ENCODE measurements at regions of chr17 and their contacts with region 1.

Region 1: GRCh38 chr17:36529121-36529520 is 5.5 kb downstream of the MYO19 start:
- DNase-seq: no peak
- H3K4me3 ChIP-seq: no peak overlapping the region
- H3K27ac ChIP-seq: no peak overlapping the region
- H3K4me1 ChIP-seq: peaks cover 3 to 6% (median 5%) of the 10 kb centered on the region in 4 experiments; a peak in 4 of 7 replicates
- H3K27me3 ChIP-seq: no peaks in the 10 kb centered on the region
- CTCF ChIP-seq: no peak
- EP300 ChIP-seq: no peak
- POLR2A ChIP-seq: no peak
- RAD21 ChIP-seq: no peak

Region 2: DNA sequence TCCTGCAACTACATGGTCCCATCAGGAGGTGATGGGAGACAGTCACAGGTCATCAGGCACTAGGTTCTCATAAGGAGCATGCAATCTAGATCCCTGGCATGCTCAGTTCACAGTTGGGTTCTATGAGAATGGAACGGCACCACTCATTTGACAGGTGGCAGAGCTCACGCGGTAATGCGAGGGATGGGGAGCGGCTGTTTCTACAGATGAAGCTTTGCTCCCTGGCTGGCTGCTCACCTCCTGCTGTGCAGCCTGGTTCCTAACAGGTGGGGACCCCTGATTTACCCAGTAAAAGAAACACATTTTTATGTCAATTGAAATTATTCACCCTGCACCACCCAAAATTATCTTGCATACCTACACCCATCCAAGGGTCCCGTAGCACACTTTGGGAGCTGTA is 85.3 kb before region 1 on chr17:
- CTCF ChIA-PET with region 1: no interaction called
- POLR2A ChIA-PET with region 1: no interaction called
- DNase-seq: no peak
- H3K4me3 ChIP-seq: no peak overlapping the region
- H3K27ac ChIP-seq: no peak overlapping the region
- H3K4me1 ChIP-seq: no peaks in the 10 kb centered on the region
- H3K27me3 ChIP-seq: no peaks in the 10 kb centered on the region
- CTCF ChIP-seq: no peak
- EP300 ChIP-seq: no peak
- POLR2A ChIP-seq: no peak
- RAD21 ChIP-seq: no peak

Region 3: GRCh38 chr17:36463916-36464315 is 65.2 kb before region 1 on chr17:
- CTCF ChIA-PET with region 1: no interaction called
- POLR2A ChIA-PET with region 1: no interaction called
- DNase-seq: peak; percentile 69 to 95
- H3K4me3 ChIP-seq: peak overlapping the region in 1 of 4 experiments; percentile 34; a peak in 2 of 8 replicates
- H3K27ac ChIP-seq: no peak overlapping the region
- H3K4me1 ChIP-seq: 0 out of 7 replicates have a peak, but pooled peaks cover 0 to 2% (median 0%) of the 10 kb centered on the region in 4 experiments
- H3K27me3 ChIP-seq: peaks cover 4 to 28% (median 18%) of the 10 kb centered on the region in 4 experiments
- CTCF ChIP-seq: peak in 1 of 3 experiments; percentile 9; a peak in 2 of 4 replicates
- EP300 ChIP-seq: 0 out of 3 replicates have a peak, but pooled peaks of 1 of the 2 experiments have one; percentile 8
- POLR2A ChIP-seq: no peak
- RAD21 ChIP-seq: peak in 1 of 2 experiments; percentile 15; a peak in 1 of 4 replicates

Region 4: GRCh38 chr17:36503456-36504155 is 25.5 kb before region 1 on chr17:
- CTCF ChIA-PET with region 1: no interaction called
- POLR2A ChIA-PET with region 1: interaction called, 53 read pairs
- DNase-seq: no peak
- H3K4me3 ChIP-seq: no peak overlapping the region
- H3K27ac ChIP-seq: no peak overlapping the region
- H3K4me1 ChIP-seq: no peaks in the 10 kb centered on the region
- H3K27me3 ChIP-seq: no peaks in the 10 kb centered on the region
- CTCF ChIP-seq: no peak
- EP300 ChIP-seq: no peak
- POLR2A ChIP-seq: no peak
- RAD21 ChIP-seq: no peak

Region 5: GRCh38 chr17:36510636-36511035 is 18.5 kb before region 1 on chr17:
- CTCF ChIA-PET with region 1: no interaction called
- POLR2A ChIA-PET with region 1: interaction called, 89 read pairs
- DNase-seq: no peak
- H3K4me3 ChIP-seq: no peak overlapping the region
- H3K27ac ChIP-seq: no peak overlapping the region
- H3K4me1 ChIP-seq: no peaks in the 10 kb centered on the region
- H3K27me3 ChIP-seq: no peaks in the 10 kb centered on the region
- CTCF ChIP-seq: no peak
- EP300 ChIP-seq: no peak
- POLR2A ChIP-seq: no peak
- RAD21 ChIP-seq: no peak

Region 6: DNA sequence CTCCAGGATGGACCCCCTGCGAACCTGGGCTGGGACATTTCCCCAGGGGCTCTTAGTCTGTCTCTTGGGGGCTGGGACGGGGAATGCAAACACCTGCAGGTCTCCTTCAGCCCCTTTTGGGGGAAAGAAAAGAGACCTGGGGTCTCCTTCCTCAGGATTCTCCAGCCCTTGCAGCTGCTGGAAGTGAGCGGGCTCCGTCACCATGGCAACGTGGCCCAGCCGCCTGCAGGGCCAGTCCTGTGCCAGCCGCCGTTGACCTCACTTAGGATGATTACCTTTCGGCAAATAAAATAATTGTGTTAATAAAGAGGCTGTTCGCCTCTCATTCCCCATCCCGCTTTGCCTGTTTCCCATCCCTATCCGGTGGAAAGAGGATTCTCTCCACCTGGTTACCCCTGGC is 98.0 kb after region 1 on chr17:
- CTCF ChIA-PET with region 1: no interaction called
- POLR2A ChIA-PET with region 1: no interaction called
- DNase-seq: peak in 1 of 2 experiments; percentile 75
- H3K4me3 ChIP-seq: no peak overlapping the region
- H3K27ac ChIP-seq: no peak overlapping the region
- H3K4me1 ChIP-seq: peaks cover 0 to 13% (median 4%) of the 10 kb centered on the region in 4 experiments; a peak in 5 of 7 replicates
- H3K27me3 ChIP-seq: no peaks in the 10 kb centered on the region; a peak in 1 of 7 replicates
- CTCF ChIP-seq: no peak
- EP300 ChIP-seq: no peak
- POLR2A ChIP-seq: no peak
- RAD21 ChIP-seq: no peak

Measured in H1 (cell line).